Right ventricle myocardium inferior (tissue), 1 donor: ENCODE measurements at regions of chr9 and their contacts with region 1.

Region 1: DNA sequence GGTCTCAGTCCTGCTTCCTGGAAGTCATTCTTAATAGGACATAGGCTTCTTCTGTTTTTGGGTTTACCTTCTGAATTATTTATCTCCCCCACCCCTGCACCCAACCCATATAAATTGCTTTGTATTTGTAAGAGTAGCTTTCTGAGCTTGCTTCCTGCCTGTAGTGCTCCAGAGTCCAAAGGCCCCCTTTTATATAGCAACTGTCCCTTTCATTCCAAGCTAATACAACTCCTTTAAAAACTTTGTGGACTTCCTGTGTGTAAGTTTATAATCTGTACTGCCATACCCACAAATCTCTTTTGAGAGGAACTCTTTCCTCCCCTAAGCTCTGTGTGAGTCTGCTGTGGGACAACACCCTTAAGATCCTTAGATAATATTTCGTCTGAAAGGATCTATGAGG is 7.8 kb downstream of the JAK2 start:
- DNase-seq: no peak
- ATAC-seq: no peak

Region 2: GRCh38 chr9:5008202-5008601 is 15.3 kb after region 1 on chr9:
- intact Hi-C with region 1: loop called (anchors 1 kb)
- DNase-seq: no peak
- ATAC-seq: no peak